Activated CD8-positive, alpha-beta memory T cell treated with anti-CD3 and anti-CD28 coated beads, Interleukin-2, amount 10 ng/mL, durations not matched to agents 7 days and 5 days (primary cell): ENCODE measurements at regions of chrX and their contacts with region 1.

Region 1: GRCh38 chrX:53422086-53422860 is at the start of gene SMC1A:
- DNase-seq: peak; percentile 97
- ATAC-seq: peak; percentile 89
- H3K4me3 Mint-ChIP-seq: peak within 1 kb of the TSS; percentile 92
- H3K27ac Mint-ChIP-seq: peak within 1 kb of the TSS; percentile 93
- H3K4me1 Mint-ChIP-seq: peaks cover 28% of the 10 kb centered on the region
- H3K27me3 Mint-ChIP-seq: no peaks in the 10 kb centered on the region
- total RNA-seq, gene SMC1A: 159 to 171 TPM

Region 2: GRCh38 chrX:53340852-53341607 is 81.2 kb before region 1 on chrX:
- CTCF ChIA-PET with region 1: no interaction called
- DNase-seq: no peak
- ATAC-seq: no peak
- H3K4me3 Mint-ChIP-seq: no peak overlapping the region
- H3K27ac Mint-ChIP-seq: no peak overlapping the region
- H3K4me1 Mint-ChIP-seq: no peaks in the 10 kb centered on the region
- H3K27me3 Mint-ChIP-seq: peaks cover 6% of the 10 kb centered on the region

Region 3: GRCh38 chrX:53433651-53434639 is 11.7 kb after region 1 on chrX and contains the start of gene HSD17B10:
- CTCF ChIA-PET with region 1: interaction called, 13 read pairs
- DNase-seq: peak; percentile 92
- ATAC-seq: peak; percentile 96
- H3K4me3 Mint-ChIP-seq: peak within 1 kb of the TSS; percentile 98
- H3K27ac Mint-ChIP-seq: peak within 1 kb of the TSS; percentile 90
- H3K4me1 Mint-ChIP-seq: peaks cover 43% of the 10 kb centered on the region
- H3K27me3 Mint-ChIP-seq: no peaks in the 10 kb centered on the region
- total RNA-seq, gene HSD17B10: 111 to 147 TPM